ENCODE measurements at regions of chr10 and their contacts with region 1.

Region 1: GRCh38 chr10:6088721-6089390 is at the start of gene RBM17:
- DNase-seq: peak; percentile 93 to 100 (median 98)
- ATAC-seq: peak; percentile 79 to 86
- H3K4me3 Mint-ChIP-seq: peak within 1 kb of the TSS; percentile 82 to 97 (median 92)
- H3K27ac Mint-ChIP-seq: peak within 1 kb of the TSS; percentile 75 to 95 (median 85)
- H3K4me1 Mint-ChIP-seq: peaks cover 36 to 67% (median 58%) of the 10 kb centered on the region in 4 donors
- H3K27me3 Mint-ChIP-seq: peaks cover 0 to 1% (median 0%) of the 10 kb centered on the region in 5 donors
- polyA plus RNA-seq, gene RBM17: 57.4 to 84.9 (median 61.3) TPM

Region 2: DNA sequence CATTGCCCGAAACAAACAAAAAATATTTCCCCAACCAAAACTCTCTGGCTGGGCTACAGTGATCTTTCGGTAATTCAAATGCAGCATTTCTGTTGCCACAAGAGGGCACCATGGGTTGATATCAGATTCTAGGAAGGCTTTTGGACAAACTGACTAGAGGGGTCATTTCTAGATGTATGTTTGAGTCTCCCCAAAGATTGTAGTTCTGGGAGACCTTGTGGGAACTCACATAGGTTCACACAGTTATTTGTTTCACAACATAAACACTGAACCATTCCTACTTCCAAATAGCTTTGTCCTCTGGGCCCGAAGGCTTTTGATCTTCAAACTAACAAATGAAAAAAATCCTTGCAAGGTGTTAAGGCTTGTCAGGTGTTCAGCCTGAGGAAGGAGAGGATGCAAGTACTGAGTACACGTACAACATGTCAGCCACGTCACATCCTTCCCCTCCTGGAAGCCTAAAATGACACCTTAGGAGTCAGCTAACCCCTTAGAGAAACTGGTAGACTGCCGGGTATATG is 74.6 kb before region 1 on chr10:
- POLR2A ChIA-PET with region 1: interaction called, 21 read pairs
- DNase-seq: peak; percentile 23 to 81 (median 70)
- ATAC-seq: peak; percentile 98 to 100
- H3K4me3 Mint-ChIP-seq: peak overlapping the region in 5 of 10 donors; percentile 2 to 51 (median 28)
- H3K27ac Mint-ChIP-seq: peak overlapping the region; percentile 50 to 96 (median 93)
- H3K4me1 Mint-ChIP-seq: peaks cover 7 to 13% (median 12%) of the 10 kb centered on the region in 4 donors
- H3K27me3 Mint-ChIP-seq: no peaks in the 10 kb centered on the region

Region 3: GRCh38 chr10:6068422-6068821 is 20.4 kb before region 1 on chr10:
- POLR2A ChIA-PET with region 1: interaction called, 30 read pairs
- DNase-seq: peak in 8 of 10 donors; percentile 38 to 77 (median 66)
- ATAC-seq: peak; percentile 95 to 96
- H3K4me3 Mint-ChIP-seq: peak overlapping the region; percentile 69 to 89 (median 82)
- H3K27ac Mint-ChIP-seq: peak overlapping the region in 9 of 10 donors; percentile 65 to 91 (median 81)
- H3K4me1 Mint-ChIP-seq: peaks cover 33 to 85% (median 72%) of the 10 kb centered on the region in 4 donors
- H3K27me3 Mint-ChIP-seq: no peaks in the 10 kb centered on the region